Activated CD4-positive, alpha-beta memory T cell treated with anti-CD3 and anti-CD28 coated beads, Interleukin-2, amount 10 ng/mL, durations not matched to agents 7 days and 5 days (primary cell): ENCODE measurements at regions of chr17 and their contacts with region 1.

Region 1: DNA sequence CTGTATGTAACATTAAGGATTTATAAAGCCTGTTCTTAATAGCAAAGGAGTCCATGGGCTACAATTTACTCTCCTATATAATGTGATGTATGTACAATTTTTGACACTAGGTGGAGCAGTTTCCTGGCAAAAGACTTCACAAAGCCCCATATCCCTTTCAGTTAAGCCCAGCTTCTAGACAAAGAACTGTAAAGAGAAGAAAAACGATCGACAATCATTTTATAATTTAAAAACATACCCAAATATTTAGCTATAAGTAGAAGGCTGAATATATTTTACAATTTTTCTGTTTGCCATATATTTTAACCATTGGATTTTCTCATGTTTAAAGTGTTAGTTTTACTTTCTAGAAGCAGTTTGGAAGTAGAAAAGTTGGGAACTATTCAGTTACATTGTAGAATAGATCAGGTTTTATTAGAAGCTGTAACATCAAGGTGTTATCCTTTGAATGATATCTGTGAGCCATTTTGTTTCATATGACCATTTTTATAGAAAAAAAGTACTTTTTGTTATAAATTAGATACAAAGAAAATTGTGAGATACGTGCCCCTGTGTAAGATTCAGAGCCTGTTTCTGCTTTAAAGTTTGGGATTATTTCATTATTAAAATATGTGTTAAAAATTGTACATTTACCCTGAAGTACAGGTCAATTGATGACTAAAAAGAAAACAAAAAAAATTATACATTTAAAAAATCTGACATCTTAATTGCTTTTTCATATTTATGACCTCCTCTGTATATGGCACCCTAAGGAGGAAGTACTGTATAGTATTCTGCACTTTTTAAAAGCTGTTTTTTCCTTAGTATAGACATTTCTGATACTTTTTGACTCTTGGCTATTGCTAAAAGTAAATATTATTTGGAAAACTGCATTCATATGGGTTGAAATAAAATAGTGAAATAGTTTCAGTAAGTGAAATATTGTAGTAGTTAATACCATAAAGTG is 46.3 kb downstream of the VMP1 start:
- DNase-seq: no peak
- H3K4me3 Mint-ChIP-seq: peak overlapping the region; percentile 35
- H3K27ac Mint-ChIP-seq: peak overlapping the region; percentile 81
- H3K4me1 Mint-ChIP-seq: peaks cover 71% of the 10 kb centered on the region
- H3K27me3 Mint-ChIP-seq: no peaks in the 10 kb centered on the region

Region 2: DNA sequence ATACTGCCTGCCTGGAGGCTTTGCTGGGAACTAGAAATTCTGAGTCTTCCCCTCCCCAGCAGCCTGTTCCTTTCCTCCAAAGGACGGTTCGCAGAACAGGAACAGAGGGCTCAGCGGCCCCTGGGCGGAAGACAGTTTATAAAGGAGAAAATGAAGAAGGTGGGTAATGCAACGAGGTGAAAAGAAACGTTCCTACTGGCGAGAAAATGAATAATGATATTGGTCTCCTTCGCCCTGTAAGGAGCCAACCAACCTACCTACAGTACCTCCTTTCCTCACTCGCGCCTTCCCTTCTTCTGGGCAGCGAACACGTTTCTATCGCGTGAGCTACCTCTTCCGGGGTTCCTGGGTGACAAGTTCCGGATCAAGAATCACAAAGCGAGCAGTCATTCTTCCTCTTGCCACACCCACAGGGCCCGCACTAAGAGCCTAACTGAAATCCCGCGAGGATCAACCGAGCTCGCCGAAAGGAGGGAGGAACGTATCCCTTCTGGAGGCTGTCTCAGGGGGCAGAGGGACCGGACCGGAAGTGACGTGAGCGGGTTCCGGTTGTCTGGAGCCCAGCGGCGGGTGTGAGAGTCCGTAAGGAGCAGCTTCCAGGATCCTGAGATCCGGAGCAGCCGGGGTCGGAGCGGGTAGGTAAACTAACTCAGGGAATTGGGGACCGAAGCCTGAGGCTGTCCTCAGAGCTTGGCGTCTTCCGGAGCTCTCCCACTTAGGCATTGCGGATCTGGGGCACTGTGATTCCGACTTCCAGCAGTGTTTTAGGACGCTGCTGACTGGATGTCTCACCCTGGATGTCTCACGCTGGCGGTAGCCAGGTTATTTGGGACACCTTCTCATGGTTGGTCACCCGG is 46.5 kb before region 1 on chr17 and contains the starts of genes PTRH2 and VMP1:
- CTCF ChIA-PET with region 1: interaction called, 4 read pairs
- POLR2A ChIA-PET with region 1: interaction called, 29 read pairs
- DNase-seq: peak; percentile 95
- H3K4me3 Mint-ChIP-seq: peak within 1 kb of the TSS; percentile 98
- H3K27ac Mint-ChIP-seq: peak within 1 kb of the TSS; percentile 91
- H3K4me1 Mint-ChIP-seq: peaks cover 50% of the 10 kb centered on the region
- H3K27me3 Mint-ChIP-seq: no peaks in the 10 kb centered on the region
- total RNA-seq, gene PTRH2: 22.8 to 23.3 TPM
- total RNA-seq, gene VMP1: 398 to 408 TPM

Region 3: DNA sequence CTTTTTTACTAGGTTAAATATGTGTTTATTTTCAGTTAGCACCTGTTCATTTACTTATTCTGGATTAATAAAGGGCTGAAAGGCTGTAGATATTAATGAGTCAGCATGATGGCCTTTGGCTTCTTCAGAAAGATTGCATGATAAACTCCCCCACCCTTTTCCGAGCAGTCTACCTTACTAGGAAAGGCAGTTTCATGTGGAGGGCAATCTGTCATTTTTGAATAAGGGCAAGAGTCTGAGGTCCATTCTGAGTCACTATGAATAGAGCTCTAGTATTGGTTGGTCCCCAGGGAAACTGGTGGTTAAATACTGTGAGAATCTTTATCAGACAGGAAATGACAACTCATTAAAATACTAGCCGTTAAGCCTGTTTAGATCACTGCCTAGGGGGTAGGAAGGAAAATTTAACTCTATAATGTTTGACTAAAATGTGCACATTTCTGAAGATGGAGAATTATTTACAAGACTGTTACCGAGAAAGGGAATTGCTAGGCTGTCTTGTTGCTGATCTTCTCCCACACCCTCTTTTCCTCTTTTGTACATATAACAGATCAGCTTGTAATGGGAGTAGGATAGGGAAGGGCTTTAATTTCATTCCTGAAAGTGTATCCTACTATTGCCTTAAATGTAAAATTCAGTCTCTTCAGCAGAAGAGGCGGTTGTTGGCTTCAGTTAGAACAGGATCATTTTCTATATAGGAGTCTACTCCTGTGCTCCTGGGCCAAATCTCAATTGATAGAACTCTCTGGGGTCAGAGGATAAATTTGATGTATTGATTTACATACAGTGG is 75.6 kb after region 1 on chr17:
- CTCF ChIA-PET with region 1: interaction called, 35 read pairs
- POLR2A ChIA-PET with region 1: interaction called, 277 read pairs
- DNase-seq: peak; percentile 62
- H3K4me3 Mint-ChIP-seq: peak overlapping the region; percentile 77
- H3K27ac Mint-ChIP-seq: peak overlapping the region; percentile 96
- H3K4me1 Mint-ChIP-seq: peaks cover 77% of the 10 kb centered on the region
- H3K27me3 Mint-ChIP-seq: no peaks in the 10 kb centered on the region

Region 4: GRCh38 chr17:59842901-59843652 is 89.3 kb after region 1 on chr17:
- CTCF ChIA-PET with region 1: interaction called, 52 read pairs
- POLR2A ChIA-PET with region 1: interaction called, 157 read pairs
- DNase-seq: peak; percentile 72
- H3K4me3 Mint-ChIP-seq: peak overlapping the region; percentile 100
- H3K27ac Mint-ChIP-seq: peak overlapping the region; percentile 99
- H3K4me1 Mint-ChIP-seq: peaks cover 57% of the 10 kb centered on the region
- H3K27me3 Mint-ChIP-seq: no peaks in the 10 kb centered on the region

Region 5: GRCh38 chr17:59914274-59914854 is 160.6 kb after region 1 on chr17:
- CTCF ChIA-PET with region 1: interaction called, 17 read pairs
- POLR2A ChIA-PET with region 1: interaction called, 3 read pairs
- DNase-seq: no peak
- H3K4me3 Mint-ChIP-seq: no peak overlapping the region
- H3K27ac Mint-ChIP-seq: no peak overlapping the region
- H3K4me1 Mint-ChIP-seq: no peaks in the 10 kb centered on the region
- H3K27me3 Mint-ChIP-seq: no peaks in the 10 kb centered on the region